ENCODE measurements at regions of chr21 and their contacts with region 1.

Region 1: DNA sequence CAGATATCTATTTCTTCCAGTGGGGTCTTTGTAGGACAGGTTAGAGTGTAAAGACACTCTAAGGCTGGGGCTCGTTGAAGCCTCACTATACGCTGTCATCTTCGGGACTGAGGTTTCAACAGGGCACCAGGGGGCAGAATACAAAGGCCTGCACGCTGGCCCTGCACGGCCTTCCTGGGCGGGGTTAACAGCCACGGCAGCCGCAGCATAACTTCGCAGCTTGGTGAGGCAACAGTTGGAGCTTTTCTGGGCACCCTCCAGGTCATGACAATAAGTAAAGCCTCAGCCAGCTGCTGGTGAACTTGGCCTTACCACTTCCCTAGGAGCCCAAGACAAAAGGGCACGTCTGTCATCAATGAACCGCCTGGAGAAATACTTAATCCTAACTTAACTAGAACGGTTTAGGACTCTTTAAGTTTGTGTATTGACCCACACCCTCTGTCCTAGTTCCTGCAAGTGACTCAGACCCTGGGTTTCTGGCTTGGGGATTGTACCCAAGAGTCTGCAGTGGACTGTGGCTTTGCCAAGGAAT is 2.3 kb upstream of the RUNX1 start:
- DNase-seq: peak; percentile 89
- H3K4me3 Mint-ChIP-seq: peak overlapping the region; percentile 11
- H3K27ac Mint-ChIP-seq: peak overlapping the region; percentile 98
- H3K4me1 Mint-ChIP-seq: peaks cover 49% of the 10 kb centered on the region
- H3K27me3 Mint-ChIP-seq: no peaks in the 10 kb centered on the region

Region 2: DNA sequence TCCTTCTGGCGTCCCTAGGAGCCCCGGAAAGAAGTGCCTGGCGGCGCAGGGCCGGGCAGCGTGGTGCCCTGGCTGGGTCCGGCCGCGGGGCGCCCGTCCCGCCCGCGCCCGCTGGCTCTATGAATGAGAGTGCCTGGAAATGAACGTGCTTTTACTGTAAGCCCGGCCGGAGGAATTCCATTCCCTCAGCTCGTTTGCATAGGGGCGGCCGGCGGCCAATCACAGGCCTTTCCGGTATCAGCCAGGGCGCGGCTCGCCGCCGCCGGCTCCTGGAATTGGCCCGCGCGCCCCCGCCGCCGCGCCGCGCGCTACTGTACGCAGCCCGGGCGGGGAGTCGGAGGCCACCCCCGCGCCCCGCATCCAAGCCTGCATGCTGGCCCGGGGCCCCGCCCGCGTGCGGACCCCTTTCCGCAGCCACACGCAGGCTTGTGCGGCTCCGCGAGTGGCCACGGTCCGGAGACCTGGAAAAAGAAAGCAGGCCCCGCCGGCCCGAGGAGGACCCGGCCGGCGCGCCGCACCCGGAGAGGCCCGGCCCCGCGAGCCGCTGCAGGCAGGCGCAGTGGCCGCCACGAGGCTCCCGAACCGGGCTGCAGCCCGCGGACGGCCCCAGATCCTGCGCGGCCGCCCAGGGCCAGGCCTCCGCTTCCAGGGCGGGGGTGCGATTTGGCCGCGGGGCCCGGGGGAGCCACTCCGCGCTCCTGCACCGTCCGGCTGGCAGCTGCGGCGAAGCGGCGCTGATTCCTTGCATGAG is 162.6 kb before region 1 on chr21:
- CTCF ChIA-PET with region 1: interaction called, 27 read pairs
- DNase-seq: peak; percentile 85
- H3K4me3 Mint-ChIP-seq: peak overlapping the region; percentile 85
- H3K27ac Mint-ChIP-seq: peak overlapping the region; percentile 97
- H3K4me1 Mint-ChIP-seq: peaks cover 57% of the 10 kb centered on the region
- H3K27me3 Mint-ChIP-seq: peaks cover 13% of the 10 kb centered on the region

Region 3: DNA sequence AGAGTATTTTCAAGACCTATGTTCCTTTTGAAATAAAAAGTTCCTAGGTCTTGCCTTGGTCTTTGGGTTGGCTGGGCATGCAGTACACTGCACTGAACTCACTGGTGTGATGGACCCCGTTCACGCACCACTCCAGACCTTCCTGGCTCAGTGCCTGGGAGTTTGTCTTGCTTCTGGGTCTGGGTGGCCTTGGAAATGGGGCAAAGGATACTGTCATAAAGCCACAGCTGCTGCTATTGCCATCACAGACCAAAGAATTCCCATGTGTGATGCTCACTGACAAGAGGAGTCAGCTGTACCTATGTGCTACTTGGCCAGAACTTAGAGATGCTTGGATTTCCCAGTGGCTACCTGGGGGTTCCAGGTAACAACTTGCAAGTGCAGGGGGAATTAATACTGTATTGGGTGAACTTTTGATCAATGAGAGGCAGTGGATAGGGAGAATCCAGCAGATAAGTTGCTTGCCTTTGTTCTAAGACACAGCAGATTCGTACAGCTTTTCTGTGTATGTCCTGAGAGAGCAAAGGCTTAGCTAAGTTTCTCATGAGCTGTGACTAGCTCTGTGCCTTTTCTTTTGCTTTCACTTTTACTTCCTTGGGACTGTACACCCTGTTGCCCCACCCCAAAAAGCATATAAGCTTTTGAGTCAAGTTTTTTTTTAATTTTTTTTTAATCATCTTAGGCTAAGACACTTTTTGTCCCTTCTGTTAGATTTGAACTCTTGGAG is 117.6 kb before region 1 on chr21:
- CTCF ChIA-PET with region 1: interaction called, 10 read pairs
- DNase-seq: peak; percentile 49
- H3K4me3 Mint-ChIP-seq: peak overlapping the region; percentile 71
- H3K27ac Mint-ChIP-seq: peak overlapping the region; percentile 99
- H3K4me1 Mint-ChIP-seq: peaks cover 75% of the 10 kb centered on the region
- H3K27me3 Mint-ChIP-seq: no peaks in the 10 kb centered on the region

Region 4: GRCh38 chr21:35010447-35010846 is 40.9 kb before region 1 on chr21:
- CTCF ChIA-PET with region 1: no interaction called
- DNase-seq: no peak
- H3K4me3 Mint-ChIP-seq: no peak overlapping the region
- H3K27ac Mint-ChIP-seq: peak overlapping the region; percentile 5
- H3K4me1 Mint-ChIP-seq: peaks cover 66% of the 10 kb centered on the region
- H3K27me3 Mint-ChIP-seq: no peaks in the 10 kb centered on the region

Region 5: DNA sequence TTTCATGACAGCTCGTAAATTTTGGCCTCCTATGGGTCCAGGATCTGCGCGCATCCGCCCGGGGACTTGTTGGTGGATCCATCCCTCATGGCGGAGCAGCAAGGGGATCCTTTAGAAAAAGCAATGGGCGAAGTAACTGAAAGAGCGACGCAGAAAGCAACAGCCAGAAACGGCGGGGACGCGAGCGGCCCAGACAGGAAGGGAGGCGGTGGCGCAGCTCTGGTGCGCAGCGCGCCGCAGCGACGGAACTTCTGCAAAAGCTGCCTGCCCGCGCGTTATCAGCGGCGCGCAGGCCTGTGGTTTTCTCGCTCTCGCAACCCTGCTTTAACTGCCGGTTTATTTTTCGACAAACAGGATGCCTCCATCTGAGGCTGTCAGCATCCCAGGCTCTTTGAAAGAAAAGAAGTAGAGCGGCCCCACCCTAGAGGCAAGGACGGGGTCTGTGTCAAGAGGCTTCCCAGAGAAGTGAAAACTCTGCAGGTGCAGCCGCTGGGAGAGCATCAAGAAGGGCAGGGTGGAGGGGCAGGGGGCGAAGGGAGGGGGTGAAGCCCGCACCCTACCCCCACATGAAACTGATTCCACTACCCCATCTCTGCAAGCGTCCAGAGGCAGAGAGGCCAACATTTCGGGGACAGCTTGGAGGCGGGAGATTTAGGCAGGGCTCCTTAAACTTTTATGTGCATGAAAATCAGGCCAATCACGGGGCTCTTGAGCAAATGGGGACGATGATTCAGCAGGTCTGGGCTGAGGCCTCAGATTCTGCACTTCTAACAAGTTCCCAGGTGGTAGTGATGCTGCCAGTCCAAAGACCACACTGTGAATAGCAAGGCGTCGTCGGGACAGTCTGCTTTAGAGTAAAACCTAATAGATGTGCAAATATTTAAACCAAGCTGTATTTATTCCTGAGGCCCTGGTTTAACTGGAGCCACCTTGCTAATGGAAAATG is 24.5 kb before region 1 on chr21:
- CTCF ChIA-PET with region 1: interaction called, 14 read pairs
- DNase-seq: peak; percentile 90
- H3K4me3 Mint-ChIP-seq: peak overlapping the region; percentile 74
- H3K27ac Mint-ChIP-seq: peak overlapping the region; percentile 99
- H3K4me1 Mint-ChIP-seq: peaks cover 93% of the 10 kb centered on the region
- H3K27me3 Mint-ChIP-seq: no peaks in the 10 kb centered on the region

Region 6: GRCh38 chr21:35324372-35325220 is 273.2 kb after region 1 on chr21:
- CTCF ChIA-PET with region 1: no interaction called
- DNase-seq: no peak
- H3K4me3 Mint-ChIP-seq: no peak overlapping the region
- H3K27ac Mint-ChIP-seq: no peak overlapping the region
- H3K4me1 Mint-ChIP-seq: no peaks in the 10 kb centered on the region
- H3K27me3 Mint-ChIP-seq: peaks cover 5% of the 10 kb centered on the region

Region 7: DNA sequence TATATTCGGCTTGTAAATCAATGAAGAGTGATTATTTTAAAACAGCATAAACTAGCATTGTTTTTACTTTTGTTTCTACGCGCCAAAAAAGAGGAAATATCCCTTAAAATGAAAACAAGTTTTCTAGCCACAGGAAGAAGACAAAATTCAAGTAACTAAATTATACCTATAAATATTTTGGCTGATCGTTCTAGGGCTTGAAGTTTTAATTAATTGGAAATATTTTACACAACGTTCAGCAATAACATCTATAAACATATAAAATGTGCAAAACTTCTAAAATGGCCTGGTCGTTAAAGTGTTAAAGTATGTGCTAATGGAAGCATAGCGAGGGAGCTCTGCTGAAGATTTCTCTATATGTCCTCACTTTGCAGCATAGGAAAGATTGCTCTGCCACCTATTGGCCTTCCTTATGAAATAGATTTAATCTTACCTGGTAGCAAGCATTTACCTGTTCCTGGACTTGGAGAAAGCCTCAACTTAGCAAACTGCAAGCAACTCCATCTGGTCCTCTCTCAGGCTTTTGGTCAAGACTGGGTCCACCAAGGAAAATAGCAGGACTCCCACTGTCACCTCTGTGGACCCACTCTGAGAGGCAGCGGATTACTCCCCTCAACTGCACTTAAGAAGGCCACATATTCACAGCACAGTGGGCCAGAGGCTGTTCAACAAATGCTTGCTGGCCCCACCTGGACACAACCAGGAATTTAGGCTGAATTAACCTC is 349.0 kb after region 1 on chr21:
- CTCF ChIA-PET with region 1: interaction called, 25 read pairs
- DNase-seq: peak; percentile 50
- H3K4me3 Mint-ChIP-seq: no peak overlapping the region
- H3K27ac Mint-ChIP-seq: no peak overlapping the region
- H3K4me1 Mint-ChIP-seq: peaks cover 13% of the 10 kb centered on the region
- H3K27me3 Mint-ChIP-seq: peaks cover 14% of the 10 kb centered on the region

Measured in activated naive CD4-positive, alpha-beta T cell treated with anti-CD3 and anti-CD28 coated beads, Interleukin-2, amount 10 ng/mL, durations not matched to agents 7 days and 5 days (primary cell).